ENCODE measurements at regions of chr3 and their contacts with region 1.

Region 1: DNA sequence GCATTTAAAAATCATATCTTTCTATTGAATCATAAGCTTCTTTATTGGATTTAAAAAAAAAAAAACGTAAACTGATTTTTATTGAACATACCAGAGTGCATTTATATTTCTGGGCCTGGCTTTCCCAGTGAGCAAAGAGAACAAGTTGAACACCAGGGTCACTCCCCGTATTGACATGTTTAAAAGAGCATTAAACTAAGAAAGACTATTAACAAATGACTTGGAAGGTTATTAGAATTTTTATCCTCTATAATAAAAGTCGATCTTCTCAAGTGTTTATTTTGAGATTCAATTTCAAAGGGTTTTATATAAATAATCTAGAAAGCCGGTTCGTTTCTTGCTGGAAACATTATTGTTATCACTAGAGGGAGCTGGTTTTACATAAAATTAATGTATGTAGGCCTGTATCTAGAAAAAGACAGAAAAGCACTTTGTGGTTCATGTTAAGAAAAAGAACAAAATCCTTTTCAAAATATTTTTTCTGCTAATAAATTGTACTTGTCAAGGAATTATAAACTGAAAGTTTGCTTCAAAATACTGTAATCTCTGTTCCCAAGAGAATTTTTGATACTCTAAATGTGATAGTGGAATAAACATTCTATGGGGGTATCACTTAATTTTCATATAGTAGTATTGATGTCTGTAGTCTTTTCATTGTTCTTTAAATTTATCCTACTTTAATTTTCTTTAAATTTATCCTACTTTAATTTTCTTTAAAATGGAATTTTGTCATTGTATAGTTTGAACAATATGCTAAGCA is 321.8 kb upstream of the MME start:
- DNase-seq: peak; percentile 70
- ATAC-seq: peak; percentile 66
- H3K4me3 ChIP-seq: no peak overlapping the region
- H3K27ac ChIP-seq: no peak overlapping the region
- H3K4me1 ChIP-seq: no peaks in the 10 kb centered on the region
- H3K27me3 ChIP-seq: no peaks in the 10 kb centered on the region
- CTCF ChIP-seq: peak; percentile 68
- POLR2A ChIP-seq: no peak
- RAD21 ChIP-seq: peak; percentile 77

Region 2: DNA sequence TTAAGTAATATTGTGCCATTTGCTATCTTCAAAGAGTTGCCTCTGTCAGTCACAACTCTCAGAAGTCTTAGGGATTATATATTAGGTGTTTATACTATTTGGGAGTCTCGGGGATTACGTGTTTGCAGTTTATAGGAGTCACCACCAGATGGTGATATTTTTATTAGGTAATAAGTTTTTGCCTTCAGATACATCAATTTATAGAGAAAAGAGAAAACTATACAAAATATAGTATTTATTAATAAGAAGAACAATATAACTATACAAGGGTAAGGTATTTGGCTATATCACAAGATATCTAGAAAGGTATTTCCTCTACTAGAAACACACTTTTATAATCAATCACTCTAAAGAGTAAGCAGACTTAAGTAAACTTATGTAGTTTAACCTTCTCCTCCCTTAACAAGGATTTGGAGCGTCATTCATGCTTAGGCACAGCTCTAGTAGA is 423.3 kb before region 1 on chr3:
- CTCF ChIA-PET with region 1: no interaction called
- POLR2A ChIA-PET with region 1: no interaction called
- dilution Hi-C with region 1: no loop called
- in situ Hi-C with region 1: no loop called
- intact Hi-C with region 1: loop called (anchors 10 kb)
- DNase-seq: peak; percentile 53
- ATAC-seq: peak; percentile 69; the same call in 1 of the 2 replicates
- H3K4me3 ChIP-seq: no peak overlapping the region
- H3K27ac ChIP-seq: no peak overlapping the region
- H3K4me1 ChIP-seq: no peaks in the 10 kb centered on the region
- H3K27me3 ChIP-seq: peaks cover 2% of the 10 kb centered on the region; the same call in 1 of the 2 replicates
- CTCF ChIP-seq: peak; percentile 62
- POLR2A ChIP-seq: no peak
- RAD21 ChIP-seq: peak; percentile 37

Region 3: DNA sequence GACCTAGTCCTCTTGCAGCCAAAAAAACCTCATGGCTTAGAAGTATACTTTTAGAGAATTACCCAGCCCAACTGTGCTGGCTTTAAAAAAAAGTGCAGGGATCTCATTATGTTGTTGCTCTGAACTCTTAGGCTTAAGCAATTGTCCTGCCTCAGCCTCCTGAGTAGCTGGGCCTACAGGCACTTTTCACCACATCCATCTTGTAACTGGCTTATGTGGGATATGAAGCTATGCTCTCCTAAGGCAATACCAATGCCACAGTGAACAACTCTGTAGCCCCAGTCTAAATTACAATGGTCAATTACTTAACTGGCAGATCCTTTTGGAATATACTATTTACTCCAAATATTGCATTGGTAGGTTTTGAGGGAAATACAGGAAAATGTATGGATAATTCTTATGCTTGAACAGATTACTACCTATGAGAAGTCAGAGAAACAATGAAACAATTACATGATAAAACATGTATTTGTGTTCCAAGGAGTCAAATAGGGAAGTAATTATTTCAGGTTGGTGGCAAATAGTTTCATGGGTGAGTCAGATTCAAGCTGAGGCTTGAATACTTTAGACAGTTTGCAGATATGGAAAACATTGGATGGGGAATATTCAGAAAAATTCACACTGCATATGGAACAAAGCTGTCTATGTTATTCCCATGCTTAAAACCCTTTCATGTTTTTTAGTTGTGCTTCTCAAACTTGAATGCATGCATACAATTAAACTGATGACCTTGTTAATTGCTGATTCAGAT is 293.7 kb before region 1 on chr3:
- CTCF ChIA-PET with region 1: no interaction called
- POLR2A ChIA-PET with region 1: no interaction called
- dilution Hi-C with region 1: no loop called
- in situ Hi-C with region 1: no loop called
- intact Hi-C with region 1: no loop called
- DNase-seq: no peak
- ATAC-seq: no peak
- H3K4me3 ChIP-seq: no peak overlapping the region
- H3K27ac ChIP-seq: no peak overlapping the region
- H3K4me1 ChIP-seq: no peaks in the 10 kb centered on the region
- H3K27me3 ChIP-seq: no peaks in the 10 kb centered on the region
- CTCF ChIP-seq: no peak
- POLR2A ChIP-seq: no peak
- RAD21 ChIP-seq: no peak

Region 4: GRCh38 chr3:154954753-154955152 is 196.5 kb after region 1 on chr3:
- CTCF ChIA-PET with region 1: no interaction called
- POLR2A ChIA-PET with region 1: no interaction called
- dilution Hi-C with region 1: no loop called
- in situ Hi-C with region 1: no loop called
- intact Hi-C with region 1: loop called (anchors 5 kb)
- DNase-seq: peak; percentile 76
- ATAC-seq: 0 out of 2 replicates have a peak, but pooled peaks have one; percentile 48
- H3K4me3 ChIP-seq: no peak overlapping the region
- H3K27ac ChIP-seq: no peak overlapping the region
- H3K4me1 ChIP-seq: no peaks in the 10 kb centered on the region
- H3K27me3 ChIP-seq: no peaks in the 10 kb centered on the region
- CTCF ChIP-seq: peak; percentile 65
- POLR2A ChIP-seq: no peak
- RAD21 ChIP-seq: peak; percentile 66

Region 5: DNA sequence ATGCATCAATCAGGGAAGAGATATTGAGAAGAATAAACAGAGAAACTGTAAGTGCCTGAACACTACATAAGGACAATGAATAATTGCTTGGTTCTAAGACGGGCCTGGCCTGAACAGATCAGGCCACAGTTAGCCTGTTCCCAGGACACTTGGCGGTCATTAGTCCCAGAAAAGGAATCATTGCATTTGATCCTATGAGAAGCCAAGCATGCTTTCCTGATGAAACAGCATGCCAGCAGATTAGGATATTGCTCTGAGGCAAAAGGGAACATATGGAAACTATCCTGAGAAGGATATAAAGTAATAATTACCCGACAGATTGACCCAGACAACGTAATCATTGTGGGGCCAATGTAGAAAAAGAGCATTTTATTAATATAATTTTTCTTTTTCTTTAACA is 483.3 kb after region 1 on chr3:
- CTCF ChIA-PET with region 1: no interaction called
- POLR2A ChIA-PET with region 1: no interaction called
- dilution Hi-C with region 1: no loop called
- in situ Hi-C with region 1: no loop called
- intact Hi-C with region 1: loop called (anchors 5 kb)
- DNase-seq: peak; percentile 81
- ATAC-seq: peak; percentile 50
- H3K4me3 ChIP-seq: no peak overlapping the region
- H3K27ac ChIP-seq: peak overlapping the region; percentile 73; the same call in 1 of the 2 replicates
- H3K4me1 ChIP-seq: peaks cover 13% of the 10 kb centered on the region
- H3K27me3 ChIP-seq: no peaks in the 10 kb centered on the region
- CTCF ChIP-seq: no peak
- POLR2A ChIP-seq: no peak
- RAD21 ChIP-seq: no peak

Region 6: GRCh38 chr3:155701882-155702465 is 943.7 kb after region 1 on chr3:
- CTCF ChIA-PET with region 1: no interaction called
- POLR2A ChIA-PET with region 1: no interaction called
- dilution Hi-C with region 1: no loop called
- in situ Hi-C with region 1: loop called (anchors 25 kb)
- intact Hi-C with region 1: loop called (anchors 5 kb)
- DNase-seq: peak; percentile 58
- ATAC-seq: peak; percentile 64
- H3K4me3 ChIP-seq: no peak overlapping the region
- H3K27ac ChIP-seq: no peak overlapping the region
- H3K4me1 ChIP-seq: no peaks in the 10 kb centered on the region
- H3K27me3 ChIP-seq: no peaks in the 10 kb centered on the region
- CTCF ChIP-seq: peak; percentile 70
- POLR2A ChIP-seq: no peak
- RAD21 ChIP-seq: peak; percentile 66

Measured in IMR-90 (cell line).